Activated B cell treated with CpG ODN at 0.5 μM for 24 hours (primary cell): ENCODE measurements at regions of chr1 and their contacts with region 1.

Region 1: GRCh38 chr1:228405987-228406265 is 709 bp downstream of the TRIM11 start:
- DNase-seq: no peak
- ATAC-seq: no peak
- H3K4me3 Mint-ChIP-seq: peak overlapping the region; percentile 90
- H3K27ac Mint-ChIP-seq: peak overlapping the region; percentile 73
- H3K4me1 Mint-ChIP-seq: peaks cover 42% of the 10 kb centered on the region
- H3K27me3 Mint-ChIP-seq: no peaks in the 10 kb centered on the region
- CTCF ChIP-seq: no peak

Region 2: DNA sequence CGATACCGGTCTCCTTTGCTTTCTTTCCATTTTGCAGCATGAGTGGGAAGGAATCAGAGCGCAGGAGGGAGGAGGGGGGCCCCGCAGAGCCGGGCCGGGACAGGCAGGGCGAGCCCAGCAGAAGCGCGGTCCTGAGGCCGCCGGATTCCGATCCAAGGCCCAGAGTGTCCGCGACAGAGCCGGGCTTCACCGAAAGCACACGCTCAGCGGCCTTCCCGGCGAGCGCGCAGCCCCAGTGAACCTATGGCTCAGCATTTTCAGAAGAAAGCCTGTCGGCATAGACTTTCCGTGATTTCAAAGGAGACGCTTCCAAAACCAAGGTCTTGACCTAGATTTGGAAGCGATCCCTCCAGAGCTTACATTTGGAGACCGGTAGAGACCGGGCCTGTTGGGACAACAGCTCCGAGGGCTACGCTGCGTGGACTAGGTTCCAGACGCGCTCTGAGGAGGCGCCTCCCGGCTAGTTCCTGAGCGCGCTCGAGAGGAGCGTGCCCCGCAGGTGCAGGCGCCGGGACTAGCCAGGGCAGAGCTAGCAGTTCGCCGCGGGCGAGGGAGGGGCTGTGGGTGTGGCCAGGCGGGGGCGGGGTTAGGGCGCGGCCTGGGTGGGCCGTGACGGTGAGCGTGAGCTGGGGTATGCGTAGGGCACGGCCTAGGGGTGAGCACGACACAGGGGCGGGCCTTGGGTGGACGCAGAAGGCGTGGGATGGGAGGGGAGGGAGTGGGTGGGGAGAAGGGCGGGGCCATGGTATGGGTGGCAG is 618.2 kb before region 1 on chr1:
- CTCF ChIA-PET with region 1: no interaction called
- POLR2A ChIA-PET with region 1: interaction called, 4 read pairs
- intact Hi-C with region 1: loop called (anchors 2 kb)
- DNase-seq: peak; percentile 83
- ATAC-seq: peak; percentile 93
- H3K4me3 Mint-ChIP-seq: peak overlapping the region; percentile 86
- H3K27ac Mint-ChIP-seq: peak overlapping the region; percentile 61
- H3K4me1 Mint-ChIP-seq: peaks cover 22% of the 10 kb centered on the region
- H3K27me3 Mint-ChIP-seq: no peaks in the 10 kb centered on the region
- CTCF ChIP-seq: no peak

Region 3: DNA sequence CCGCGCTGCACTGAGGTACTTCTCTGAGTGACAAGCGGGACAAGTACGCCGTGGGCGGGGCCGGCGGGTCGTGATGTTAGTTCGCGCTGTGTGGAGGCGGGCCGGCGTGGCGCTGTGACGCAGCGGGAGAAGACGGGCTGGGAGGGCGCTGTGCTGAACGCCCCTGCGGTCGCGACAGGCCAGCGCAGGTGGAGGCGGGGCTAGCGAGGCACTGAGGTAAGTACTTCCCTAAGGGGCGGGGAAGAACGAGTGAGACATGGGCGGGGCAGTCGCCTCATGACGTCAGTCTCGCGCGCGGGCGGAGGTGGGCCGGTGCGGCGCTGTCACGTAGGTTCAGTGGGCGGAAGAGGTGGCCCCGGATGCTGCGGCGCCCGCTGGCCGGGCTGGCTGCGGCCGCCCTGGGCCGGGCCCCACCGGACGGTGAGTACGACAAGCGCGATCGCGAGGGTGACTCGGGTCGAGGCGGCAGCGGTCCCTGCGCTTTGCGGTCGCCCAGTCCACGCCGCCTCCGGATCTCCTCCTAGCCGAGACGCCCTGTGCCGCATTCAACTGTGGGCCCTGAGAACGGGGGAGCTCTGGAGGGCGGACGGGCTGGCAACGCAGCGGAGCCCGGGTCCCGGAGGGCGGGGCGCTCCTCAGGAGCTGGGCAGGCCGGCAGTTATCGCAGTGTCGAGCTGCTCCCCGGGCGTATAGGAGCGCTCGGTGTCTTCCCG is 265.8 kb before region 1 on chr1 and contains the start of gene GUK1:
- CTCF ChIA-PET with region 1: no interaction called
- POLR2A ChIA-PET with region 1: interaction called, 6 read pairs
- intact Hi-C with region 1: loop called (anchors 2 kb)
- DNase-seq: peak; percentile 99
- ATAC-seq: peak; percentile 92
- H3K4me3 Mint-ChIP-seq: peak within 1 kb of the TSS; percentile 96
- H3K27ac Mint-ChIP-seq: peak within 1 kb of the TSS; percentile 99
- H3K4me1 Mint-ChIP-seq: peaks cover 71% of the 10 kb centered on the region
- H3K27me3 Mint-ChIP-seq: no peaks in the 10 kb centered on the region
- CTCF ChIP-seq: no peak
- total RNA-seq, gene GUK1: 104 and 119 TPM in 2 replicates

Region 4: DNA sequence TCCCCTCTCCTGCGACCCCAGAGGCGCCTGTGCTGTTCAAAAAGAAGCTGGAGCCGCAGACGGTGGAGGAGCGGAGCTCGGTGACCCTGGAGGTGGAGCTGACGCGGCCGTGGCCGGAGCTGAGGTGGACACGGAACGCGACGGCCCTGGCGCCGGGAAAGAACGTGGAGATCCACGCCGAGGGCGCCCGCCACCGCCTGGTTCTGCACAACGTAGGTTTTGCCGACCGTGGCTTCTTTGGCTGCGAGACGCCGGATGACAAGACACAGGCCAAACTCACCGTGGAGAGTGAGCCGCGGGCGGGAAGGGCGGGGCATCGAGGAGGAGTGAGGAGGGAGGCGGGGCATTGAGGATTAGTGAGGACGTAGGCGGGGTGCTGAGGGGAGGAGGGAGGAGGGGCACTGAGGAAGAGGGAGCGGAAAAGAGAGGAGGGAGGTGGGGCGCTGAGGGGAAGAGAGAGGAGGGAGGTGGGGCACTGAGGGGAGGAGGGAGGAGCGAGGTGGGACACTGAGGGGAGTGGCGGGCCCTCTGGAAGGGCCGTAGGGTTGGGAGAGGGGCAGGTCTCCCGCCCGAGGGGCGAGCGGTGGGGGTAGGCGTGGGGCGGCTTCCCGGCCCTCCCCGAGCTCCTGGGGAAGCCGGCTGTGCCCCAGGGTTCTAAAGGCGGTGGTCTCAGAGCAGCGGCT is 130.0 kb before region 1 on chr1:
- CTCF ChIA-PET with region 1: no interaction called
- POLR2A ChIA-PET with region 1: interaction called, 7 read pairs
- intact Hi-C with region 1: loop called (anchors 1 kb)
- DNase-seq: peak; percentile 66
- ATAC-seq: peak; percentile 98
- H3K4me3 Mint-ChIP-seq: peak overlapping the region; percentile 82
- H3K27ac Mint-ChIP-seq: no peak overlapping the region
- H3K4me1 Mint-ChIP-seq: peaks cover 8% of the 10 kb centered on the region
- H3K27me3 Mint-ChIP-seq: no peaks in the 10 kb centered on the region
- CTCF ChIP-seq: no peak

Region 5: GRCh38 chr1:228457396-228458176 is 51.7 kb after region 1 on chr1:
- CTCF ChIA-PET with region 1: no interaction called
- POLR2A ChIA-PET with region 1: interaction called, 16 read pairs
- intact Hi-C with region 1: loop called (anchors 1 kb)
- DNase-seq: peak; percentile 53
- ATAC-seq: peak; percentile 85
- H3K4me3 Mint-ChIP-seq: peak overlapping the region; percentile 89
- H3K27ac Mint-ChIP-seq: peak overlapping the region; percentile 89
- H3K4me1 Mint-ChIP-seq: peaks cover 25% of the 10 kb centered on the region
- H3K27me3 Mint-ChIP-seq: peaks cover 26% of the 10 kb centered on the region
- CTCF ChIP-seq: no peak

Region 6: DNA sequence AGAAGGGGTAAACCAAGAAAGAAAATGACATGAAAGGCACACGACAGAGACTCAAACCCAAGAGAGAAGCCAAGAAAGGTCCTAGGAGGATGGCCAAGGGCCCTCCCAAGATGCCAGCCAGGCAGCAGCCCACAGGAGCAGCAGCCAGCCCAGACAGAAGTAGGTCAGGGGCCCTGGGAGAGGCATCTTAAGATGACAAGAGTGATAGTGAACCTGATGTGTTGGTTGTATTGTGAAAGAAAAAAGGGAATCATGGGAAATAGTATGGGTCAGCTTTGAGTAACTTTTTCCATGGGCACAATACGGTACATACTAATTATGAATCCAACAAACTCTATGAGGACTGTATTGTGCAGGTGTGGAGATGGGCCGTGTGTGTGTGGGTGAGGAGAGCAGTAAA is 933.6 kb after region 1 on chr1:
- CTCF ChIA-PET with region 1: no interaction called
- POLR2A ChIA-PET with region 1: no interaction called
- intact Hi-C with region 1: no loop called
- DNase-seq: no peak
- ATAC-seq: no peak
- H3K4me3 Mint-ChIP-seq: peak overlapping the region; percentile 60
- H3K27ac Mint-ChIP-seq: no peak overlapping the region
- H3K4me1 Mint-ChIP-seq: peaks cover 38% of the 10 kb centered on the region
- H3K27me3 Mint-ChIP-seq: peaks cover 2% of the 10 kb centered on the region
- CTCF ChIP-seq: no peak

Region 7: DNA sequence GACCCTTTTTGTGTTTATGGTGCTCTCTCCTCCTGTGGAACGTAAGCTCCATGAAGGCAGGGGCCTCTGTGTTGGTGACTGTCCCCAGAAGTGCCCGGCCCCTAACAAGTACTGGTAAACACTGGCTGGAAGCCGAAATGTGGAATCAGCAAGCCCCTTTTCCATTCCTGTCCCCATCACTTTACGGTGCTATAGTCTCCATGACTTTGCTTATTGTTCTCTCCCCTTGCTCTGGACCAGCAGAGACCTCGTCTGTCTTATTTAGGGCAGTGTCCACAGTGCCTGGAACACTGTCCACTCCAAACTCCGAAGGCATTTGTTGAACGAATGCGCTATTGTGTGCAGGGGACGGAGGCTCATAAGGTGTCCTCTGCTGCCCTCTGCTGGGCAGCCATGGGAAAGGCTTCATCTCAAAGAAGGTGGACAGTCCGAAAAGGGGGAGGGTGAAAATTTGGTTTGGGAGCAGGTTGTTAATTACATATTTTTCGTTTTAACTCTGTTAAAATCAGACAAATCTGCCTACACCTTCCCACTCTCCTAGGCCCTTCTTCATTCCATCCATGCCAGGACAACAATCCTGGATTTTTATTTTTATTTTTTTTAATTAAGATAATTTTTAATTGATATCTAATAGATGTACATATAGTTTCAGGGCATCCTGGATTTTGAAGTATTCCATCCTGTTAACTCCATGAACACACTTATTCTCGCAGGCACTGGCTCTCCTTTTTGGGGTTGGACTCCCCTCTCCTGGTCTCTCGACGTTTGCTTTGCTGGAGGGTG is 1904.6 kb after region 1 on chr1:
- CTCF ChIA-PET with region 1: no interaction called
- POLR2A ChIA-PET with region 1: interaction called, 12 read pairs
- intact Hi-C with region 1: no loop called
- DNase-seq: peak; percentile 64
- ATAC-seq: peak; percentile 80
- H3K4me3 Mint-ChIP-seq: no peak overlapping the region
- H3K27ac Mint-ChIP-seq: no peak overlapping the region
- H3K4me1 Mint-ChIP-seq: peaks cover 17% of the 10 kb centered on the region
- H3K27me3 Mint-ChIP-seq: peaks cover 4% of the 10 kb centered on the region
- CTCF ChIP-seq: peak; percentile 89